IMR-90 (cell line): ENCODE measurements at regions of chr1 and their contacts with region 1.

Region 1: DNA sequence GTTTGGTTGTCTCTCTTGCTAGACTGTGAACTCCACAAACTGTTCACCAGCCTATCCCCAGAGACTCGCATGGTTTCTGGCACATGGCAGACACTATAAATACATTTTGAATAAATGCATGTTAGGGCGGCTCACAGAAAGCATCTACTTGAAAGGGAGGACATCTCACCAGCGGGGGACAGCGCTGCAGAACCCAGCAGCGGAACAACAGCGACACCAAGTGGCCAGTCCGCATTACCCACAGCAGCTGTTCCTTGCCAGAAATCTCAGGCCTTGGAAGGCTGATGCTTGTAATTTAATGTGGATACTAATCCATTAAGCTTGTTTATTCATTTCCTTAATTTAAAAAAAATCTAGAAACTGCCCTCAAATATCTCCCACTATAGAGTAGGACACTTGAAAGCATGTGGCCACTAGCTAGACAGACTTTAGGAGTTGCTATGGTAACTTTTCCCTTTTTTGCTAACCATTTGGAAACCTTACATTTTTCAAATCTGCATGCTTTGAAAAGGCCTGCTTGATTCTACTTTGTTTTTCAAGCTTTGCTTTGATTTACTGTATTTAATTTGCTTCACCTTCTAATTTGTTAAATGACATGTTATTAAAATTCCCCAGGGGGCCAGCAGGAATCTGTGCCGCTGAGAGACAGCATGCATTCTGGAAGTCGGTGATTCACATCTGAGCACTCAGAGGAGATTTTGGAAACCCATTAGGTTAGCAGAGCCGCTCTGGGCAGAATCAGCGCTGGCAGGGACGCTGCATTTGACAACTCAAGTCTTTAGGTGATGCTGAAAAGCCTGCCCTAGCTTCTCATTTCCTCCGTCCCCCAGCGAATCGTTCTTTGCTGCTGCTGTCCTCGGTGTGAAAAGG is 63.5 kb upstream of the SSX2IP start:
- DNase-seq: peak; percentile 78
- ATAC-seq: peak; percentile 92
- H3K4me3 ChIP-seq: no peak overlapping the region
- H3K27ac ChIP-seq: no peak overlapping the region
- H3K4me1 ChIP-seq: peaks cover 5% of the 10 kb centered on the region; the same call in 1 of the 2 replicates
- H3K27me3 ChIP-seq: no peaks in the 10 kb centered on the region
- CTCF ChIP-seq: peak; percentile 98
- POLR2A ChIP-seq: peak; percentile 57; the same call in 1 of the 2 replicates
- RAD21 ChIP-seq: peak; percentile 100

Region 2: DNA sequence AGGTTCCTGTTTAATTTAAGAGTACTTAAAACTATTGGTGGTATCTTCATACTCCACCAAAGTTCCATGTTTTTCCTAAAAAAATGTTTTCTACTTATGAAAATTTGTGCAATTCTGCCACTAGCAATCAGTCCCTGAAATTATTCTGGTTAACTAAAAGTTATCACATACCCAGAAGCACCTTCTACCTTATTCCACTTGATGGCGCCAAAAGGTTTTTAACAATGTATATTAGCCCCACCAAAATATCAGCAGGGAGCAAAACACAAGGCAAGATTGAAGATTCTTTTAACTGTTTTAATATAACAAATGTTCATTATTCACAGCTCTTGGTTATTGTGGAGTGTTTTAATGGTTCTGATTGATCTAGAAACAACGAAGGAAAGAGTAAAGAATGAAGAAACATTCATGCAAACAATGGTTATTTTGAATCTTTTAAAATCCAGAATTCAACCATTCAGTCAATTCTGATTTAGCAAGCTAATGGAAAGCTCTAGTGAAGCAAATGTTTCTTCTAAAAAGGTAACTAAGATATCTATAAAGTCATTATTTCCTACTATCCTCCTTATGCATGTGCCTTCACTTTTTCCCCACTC is 822.0 kb before region 1 on chr1:
- CTCF ChIA-PET with region 1: no interaction called
- POLR2A ChIA-PET with region 1: no interaction called
- dilution Hi-C with region 1: no loop called
- in situ Hi-C with region 1: no loop called
- intact Hi-C with region 1: loop called (anchors 5 kb)
- DNase-seq: peak; percentile 60
- ATAC-seq: peak; percentile 76
- H3K4me3 ChIP-seq: no peak overlapping the region
- H3K27ac ChIP-seq: no peak overlapping the region
- H3K4me1 ChIP-seq: peaks cover 4% of the 10 kb centered on the region; the same call in 1 of the 2 replicates
- H3K27me3 ChIP-seq: no peaks in the 10 kb centered on the region
- CTCF ChIP-seq: peak; percentile 84
- POLR2A ChIP-seq: no peak
- RAD21 ChIP-seq: peak; percentile 84

Region 3: GRCh38 chr1:84156210-84156621 is 597.5 kb before region 1 on chr1:
- CTCF ChIA-PET with region 1: no interaction called
- POLR2A ChIA-PET with region 1: no interaction called
- dilution Hi-C with region 1: no loop called
- in situ Hi-C with region 1: loop called (anchors 10 kb)
- intact Hi-C with region 1: no loop called
- DNase-seq: peak; percentile 90
- ATAC-seq: peak; percentile 83
- H3K4me3 ChIP-seq: no peak overlapping the region
- H3K27ac ChIP-seq: no peak overlapping the region
- H3K4me1 ChIP-seq: peaks cover 4% of the 10 kb centered on the region
- H3K27me3 ChIP-seq: no peaks in the 10 kb centered on the region
- CTCF ChIP-seq: no peak
- POLR2A ChIP-seq: no peak
- RAD21 ChIP-seq: no peak

Region 4: DNA sequence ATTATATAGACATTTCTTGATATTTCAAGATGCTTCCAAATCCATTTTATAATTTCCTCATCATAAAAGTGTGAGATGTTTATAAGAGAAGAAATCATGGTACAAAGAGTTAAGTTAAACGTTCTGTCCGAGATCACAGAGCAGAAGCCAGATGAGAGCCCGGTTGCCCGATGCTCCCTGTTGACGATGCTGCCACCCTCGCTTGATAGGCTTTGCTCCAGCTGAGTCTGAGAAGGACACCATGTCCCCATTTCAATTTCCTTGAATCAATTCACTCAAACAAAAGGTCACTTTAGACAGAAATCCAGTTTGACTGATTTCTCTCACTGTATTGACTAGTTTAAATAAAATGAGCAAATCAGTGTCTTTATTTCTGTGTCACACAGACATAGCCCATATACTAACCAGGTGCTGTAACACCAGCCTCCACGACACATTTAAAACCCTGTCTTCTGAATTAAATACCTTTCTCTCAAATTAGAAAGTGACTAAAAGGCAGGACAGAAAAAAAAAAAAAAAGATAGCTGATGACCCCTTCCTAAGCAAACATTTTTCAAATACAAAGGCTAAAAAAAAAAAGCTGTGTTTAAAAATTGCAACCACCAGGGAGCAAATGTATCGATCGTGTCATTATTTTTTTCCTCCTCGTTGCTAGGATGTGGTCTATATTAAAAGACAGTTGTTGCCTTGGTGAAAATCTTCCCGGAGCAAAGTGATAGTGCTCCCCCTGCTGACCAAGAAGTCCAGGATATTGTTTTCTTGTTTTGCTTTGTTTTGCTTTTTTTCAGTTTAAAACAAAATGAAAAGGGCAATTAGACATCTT is 320.3 kb before region 1 on chr1:
- CTCF ChIA-PET with region 1: interaction called, 3 read pairs
- POLR2A ChIA-PET with region 1: no interaction called
- dilution Hi-C with region 1: no loop called
- in situ Hi-C with region 1: loop called (anchors 25 kb)
- intact Hi-C with region 1: no loop called
- DNase-seq: peak; percentile 78
- ATAC-seq: peak; percentile 85
- H3K4me3 ChIP-seq: no peak overlapping the region
- H3K27ac ChIP-seq: no peak overlapping the region
- H3K4me1 ChIP-seq: no peaks in the 10 kb centered on the region; the same call in 1 of the 2 replicates
- H3K27me3 ChIP-seq: no peaks in the 10 kb centered on the region
- CTCF ChIP-seq: peak; percentile 85
- POLR2A ChIP-seq: no peak
- RAD21 ChIP-seq: peak; percentile 91

Region 5: GRCh38 chr1:84506002-84506728 is 247.6 kb before region 1 on chr1 and contains the starts of genes GNG5 and SPATA1:
- CTCF ChIA-PET with region 1: interaction called, 4 read pairs
- POLR2A ChIA-PET with region 1: no interaction called
- dilution Hi-C with region 1: no loop called
- in situ Hi-C with region 1: no loop called
- intact Hi-C with region 1: loop called (anchors 1 kb)
- DNase-seq: peak; percentile 95
- ATAC-seq: peak; percentile 94
- H3K4me3 ChIP-seq: peak within 1 kb of the TSS; percentile 92
- H3K27ac ChIP-seq: peak within 1 kb of the TSS; percentile 95
- H3K4me1 ChIP-seq: peaks cover 6% of the 10 kb centered on the region; the same call in 1 of the 2 replicates
- H3K27me3 ChIP-seq: no peaks in the 10 kb centered on the region
- CTCF ChIP-seq: 0 out of 2 replicates have a peak, but pooled peaks have one; percentile 1
- POLR2A ChIP-seq: peak; percentile 95
- RAD21 ChIP-seq: peak; percentile 0; the same call in 1 of the 2 replicates
- total RNA-seq, gene GNG5: 30.8 and 36.4 TPM in 2 replicates
- total RNA-seq, gene SPATA1: under 0.01 and 0.56 TPM in 2 replicates

Region 6: DNA sequence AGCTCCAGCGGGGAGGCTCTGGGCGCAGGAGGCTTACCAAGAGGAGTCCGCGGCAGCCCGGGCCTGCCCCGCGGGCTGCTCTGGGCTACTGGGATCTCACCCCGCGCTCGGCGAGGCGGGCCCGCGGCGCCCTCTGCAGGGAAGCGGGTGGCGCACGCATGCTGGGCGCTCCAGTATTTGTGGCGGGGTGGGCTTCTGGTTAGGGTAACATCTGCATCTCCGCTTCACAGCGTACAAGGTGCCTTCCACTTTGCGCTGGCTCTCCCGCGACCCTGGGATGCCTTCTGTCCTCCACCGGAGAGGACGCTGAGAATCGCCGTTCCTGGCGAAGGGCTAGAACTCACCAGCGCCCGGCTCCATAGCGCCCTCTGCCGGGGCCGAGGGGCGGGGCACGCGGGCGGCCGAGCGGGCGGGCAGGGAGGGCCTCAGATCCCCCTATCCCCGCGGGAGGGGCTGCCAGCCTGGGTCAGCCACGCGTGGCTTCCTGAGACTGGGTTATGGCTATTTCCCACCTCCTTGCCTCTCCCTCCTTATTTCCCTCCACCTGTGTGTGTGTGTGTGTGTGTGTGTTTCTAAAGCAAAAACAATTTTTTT is 132.9 kb before region 1 on chr1:
- CTCF ChIA-PET with region 1: interaction called, 3 read pairs
- POLR2A ChIA-PET with region 1: no interaction called
- dilution Hi-C with region 1: no loop called
- in situ Hi-C with region 1: loop called (anchors 5 kb)
- intact Hi-C with region 1: loop called (anchors 2 kb)
- DNase-seq: peak; percentile 57
- ATAC-seq: peak; percentile 93
- H3K4me3 ChIP-seq: peak overlapping the region; percentile 72
- H3K27ac ChIP-seq: peak overlapping the region; percentile 77
- H3K4me1 ChIP-seq: peaks cover 6% of the 10 kb centered on the region
- H3K27me3 ChIP-seq: no peaks in the 10 kb centered on the region
- CTCF ChIP-seq: peak; percentile 63
- POLR2A ChIP-seq: no peak
- RAD21 ChIP-seq: peak; percentile 49

Region 7: DNA sequence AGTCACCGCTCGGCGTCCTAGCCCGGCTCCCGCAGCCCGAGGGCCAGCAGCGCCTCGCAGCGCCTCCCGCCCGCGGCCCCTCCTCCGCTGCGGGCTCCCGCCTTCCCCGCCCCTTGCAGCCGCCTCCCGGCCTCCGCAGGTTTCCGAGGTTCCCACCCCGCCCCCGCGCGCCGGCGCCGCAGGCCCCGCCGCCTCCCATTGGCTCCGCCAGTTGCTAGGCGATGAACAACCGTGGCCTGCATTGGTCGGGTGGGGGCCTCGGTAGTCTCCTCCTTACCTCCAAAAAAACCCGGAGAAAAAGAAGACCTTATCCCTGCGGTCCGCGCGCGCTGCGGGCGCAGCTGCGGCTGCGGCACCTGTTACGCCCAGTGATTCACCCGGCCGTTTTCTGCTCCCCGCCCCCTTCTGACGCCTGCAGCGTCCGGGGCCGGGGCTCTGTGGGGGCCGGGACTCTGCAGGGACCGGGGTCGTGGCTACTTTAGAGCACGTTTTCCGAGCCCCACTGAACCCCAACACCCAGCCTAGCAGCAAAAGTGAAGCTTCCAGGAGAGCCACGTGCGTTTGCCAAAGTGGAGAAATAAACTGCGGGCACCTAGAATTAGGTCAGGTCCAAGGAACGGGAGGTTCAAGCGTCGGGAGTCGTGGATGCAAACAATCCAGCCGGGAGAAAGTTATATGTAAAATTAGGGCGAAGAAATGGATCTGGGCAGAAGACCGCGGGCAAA is 63.2 kb before region 1 on chr1 and contains the start of gene SSX2IP:
- CTCF ChIA-PET with region 1: no interaction called
- POLR2A ChIA-PET with region 1: no interaction called
- dilution Hi-C with region 1: no loop called
- in situ Hi-C with region 1: no loop called
- intact Hi-C with region 1: loop called (anchors 2 kb)
- DNase-seq: peak; percentile 97
- ATAC-seq: peak; percentile 93
- H3K4me3 ChIP-seq: peak within 1 kb of the TSS; percentile 96
- H3K27ac ChIP-seq: peak within 1 kb of the TSS; percentile 80
- H3K4me1 ChIP-seq: peaks cover 4% of the 10 kb centered on the region
- H3K27me3 ChIP-seq: no peaks in the 10 kb centered on the region
- CTCF ChIP-seq: no peak
- POLR2A ChIP-seq: no peak
- RAD21 ChIP-seq: no peak
- total RNA-seq, gene SSX2IP: 13.4 and 22.8 TPM in 2 replicates